ENCODE measurements at regions of chr12 and their contacts with region 1.

Region 1: DNA sequence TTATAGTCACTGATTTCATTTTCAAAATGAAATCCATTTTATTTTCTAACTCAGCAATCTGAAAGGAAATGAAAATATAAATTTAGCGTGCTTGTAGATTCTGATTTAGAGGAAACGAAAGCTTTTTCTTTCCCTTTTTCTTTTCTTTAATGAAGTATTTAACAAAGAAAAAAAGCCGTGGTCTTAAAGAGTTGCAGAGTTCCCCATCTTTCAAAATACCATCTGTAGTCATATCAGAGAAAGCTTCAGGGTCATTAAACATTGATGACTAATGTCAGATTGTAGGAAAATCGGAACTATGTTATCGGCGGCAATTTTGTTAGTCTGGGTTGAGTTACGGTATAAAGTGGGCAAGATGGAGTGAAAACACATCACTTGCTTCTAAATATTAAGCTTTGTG is 32.3 kb downstream of the DRAM1 start:
- H3K4me3 ChIP-seq: no peak overlapping the region
- H3K27ac ChIP-seq: no peak overlapping the region
- H3K4me1 ChIP-seq: peaks cover 4% of the 10 kb centered on the region; the same call in 1 of the 2 replicates
- CTCF ChIP-seq: no peak

Region 2: GRCh38 chr12:101727133-101727532 is 182.5 kb before region 1 on chr12:
- CTCF ChIA-PET with region 1: no interaction called
- POLR2A ChIA-PET with region 1: no interaction called
- H3K4me3 ChIP-seq: no peak overlapping the region
- H3K27ac ChIP-seq: no peak overlapping the region
- H3K4me1 ChIP-seq: no peaks in the 10 kb centered on the region
- CTCF ChIP-seq: no peak

Region 3: GRCh38 chr12:101891462-101892273 is 18.0 kb before region 1 on chr12:
- CTCF ChIA-PET with region 1: no interaction called
- POLR2A ChIA-PET with region 1: interaction called, 10 read pairs
- H3K4me3 ChIP-seq: no peak overlapping the region
- H3K27ac ChIP-seq: peak overlapping the region; percentile 17; the same call in 1 of the 2 replicates
- H3K4me1 ChIP-seq: peaks cover 10% of the 10 kb centered on the region
- CTCF ChIP-seq: no peak